Naive thymus-derived CD8-positive, alpha-beta T cell (primary cell): ENCODE measurements at regions of chr6 and their contacts with region 1.

Region 1: GRCh38 chr6:26103770-26104456 is 16.7 kb downstream of the HFE start:
- DNase-seq: peak; percentile 71 to 97 (median 94)
- ATAC-seq: peak; percentile 91 to 92
- H3K4me3 Mint-ChIP-seq: peak overlapping the region; percentile 87 to 93 (median 89)
- H3K27ac Mint-ChIP-seq: peak overlapping the region; percentile 96 to 100 (median 98)
- H3K4me1 Mint-ChIP-seq: peaks cover 10 to 20% (median 14%) of the 10 kb centered on the region in 4 donors
- H3K27me3 Mint-ChIP-seq: peaks cover 0 to 4% (median 0%) of the 10 kb centered on the region in 5 donors

Region 2: GRCh38 chr6:25136854-25137253 is 967.1 kb before region 1 on chr6:
- POLR2A ChIA-PET with region 1: no interaction called
- DNase-seq: no peak
- ATAC-seq: no peak
- H3K4me3 Mint-ChIP-seq: peak overlapping the region; percentile 84 to 95 (median 92)
- H3K27ac Mint-ChIP-seq: peak overlapping the region; percentile 90 to 98 (median 94)
- H3K4me1 Mint-ChIP-seq: peaks cover 24 to 50% (median 39%) of the 10 kb centered on the region in 4 donors
- H3K27me3 Mint-ChIP-seq: no peaks in the 10 kb centered on the region

Region 3: DNA sequence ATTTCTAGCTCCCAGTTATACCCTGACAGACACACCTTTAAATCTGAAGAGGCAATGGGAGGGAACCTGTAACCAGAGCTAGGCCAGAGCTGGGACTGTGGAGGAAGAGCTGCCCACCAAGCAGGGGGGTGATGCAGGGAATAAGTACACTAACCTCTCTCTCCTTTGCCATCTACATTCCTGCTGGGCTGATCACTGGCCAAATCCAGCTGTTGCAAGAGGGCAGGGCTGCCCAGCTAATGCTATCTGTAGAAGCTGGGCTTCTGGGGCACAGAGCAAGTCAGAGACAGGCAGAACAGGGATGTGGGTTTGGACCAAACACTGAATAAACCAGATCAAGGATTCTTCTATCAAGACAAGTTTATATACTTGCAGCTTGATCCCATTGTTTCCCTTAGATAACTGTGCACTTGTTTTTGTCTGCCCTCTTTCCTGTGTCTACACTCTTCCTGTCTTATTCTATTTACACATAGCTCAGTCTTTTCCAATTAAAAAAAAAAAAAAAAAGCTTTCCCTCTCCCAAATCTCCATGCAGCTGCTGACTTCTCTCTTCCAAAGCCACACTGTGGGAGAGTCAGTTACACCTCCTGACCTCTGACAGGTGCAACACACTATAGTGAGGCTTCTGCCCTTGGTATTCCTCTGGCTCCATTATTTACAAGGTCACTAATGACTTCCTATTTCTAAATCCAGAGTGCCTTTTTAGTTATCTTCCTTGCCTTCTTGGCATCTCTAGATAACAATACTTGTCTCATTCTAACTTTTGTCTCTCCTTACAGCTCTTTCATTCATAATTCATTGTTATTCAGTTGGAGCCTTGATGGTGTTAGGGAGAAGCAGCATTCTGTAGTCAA is 97.6 kb before region 1 on chr6:
- POLR2A ChIA-PET with region 1: no interaction called
- DNase-seq: no peak
- ATAC-seq: no peak
- H3K4me3 Mint-ChIP-seq: no peak overlapping the region
- H3K27ac Mint-ChIP-seq: peak overlapping the region in 1 of 10 donors; percentile 2
- H3K4me1 Mint-ChIP-seq: peaks cover 0 to 8% (median 2%) of the 10 kb centered on the region in 4 donors
- H3K27me3 Mint-ChIP-seq: no peaks in the 10 kb centered on the region

Region 4: DNA sequence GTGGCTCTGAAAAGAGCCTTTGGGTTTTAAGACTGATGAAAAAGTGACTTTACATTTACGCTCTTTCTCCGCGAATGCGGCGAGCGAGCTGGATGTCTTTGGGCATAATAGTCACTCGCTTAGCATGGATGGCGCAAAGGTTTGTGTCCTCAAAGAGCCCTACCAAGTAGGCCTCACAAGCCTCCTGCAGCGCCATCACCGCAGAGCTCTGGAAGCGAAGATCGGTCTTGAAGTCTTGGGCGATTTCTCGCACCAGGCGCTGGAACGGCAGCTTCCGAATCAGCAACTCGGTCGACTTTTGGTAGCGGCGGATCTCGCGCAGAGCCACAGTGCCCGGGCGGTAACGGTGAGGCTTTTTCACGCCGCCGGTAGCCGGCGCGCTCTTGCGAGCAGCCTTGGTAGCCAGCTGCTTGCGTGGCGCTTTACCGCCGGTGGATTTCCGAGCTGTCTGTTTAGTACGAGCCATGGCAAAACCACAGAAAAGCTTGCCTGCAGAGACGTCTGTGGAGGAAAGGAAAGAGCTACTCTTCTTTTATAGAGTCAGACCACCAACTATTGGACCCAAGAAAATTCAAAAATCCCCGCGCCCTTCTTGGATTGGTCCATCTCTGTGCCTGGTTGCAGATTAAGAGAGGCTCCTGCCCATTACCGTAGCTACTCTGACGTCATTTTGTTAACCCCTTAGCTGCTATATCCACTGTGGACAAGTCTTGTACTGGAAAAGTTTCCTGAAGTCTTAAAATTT is 72.1 kb before region 1 on chr6:
- POLR2A ChIA-PET with region 1: interaction called, 36 read pairs
- DNase-seq: peak; percentile 71 to 96 (median 91)
- ATAC-seq: peak; percentile 67 to 71
- H3K4me3 Mint-ChIP-seq: peak overlapping the region; percentile 94 to 97 (median 95)
- H3K27ac Mint-ChIP-seq: peak overlapping the region; percentile 93 to 99 (median 96)
- H3K4me1 Mint-ChIP-seq: peaks cover 11 to 52% (median 41%) of the 10 kb centered on the region in 4 donors
- H3K27me3 Mint-ChIP-seq: peaks cover 0 to 2% (median 0%) of the 10 kb centered on the region in 5 donors

Region 5: DNA sequence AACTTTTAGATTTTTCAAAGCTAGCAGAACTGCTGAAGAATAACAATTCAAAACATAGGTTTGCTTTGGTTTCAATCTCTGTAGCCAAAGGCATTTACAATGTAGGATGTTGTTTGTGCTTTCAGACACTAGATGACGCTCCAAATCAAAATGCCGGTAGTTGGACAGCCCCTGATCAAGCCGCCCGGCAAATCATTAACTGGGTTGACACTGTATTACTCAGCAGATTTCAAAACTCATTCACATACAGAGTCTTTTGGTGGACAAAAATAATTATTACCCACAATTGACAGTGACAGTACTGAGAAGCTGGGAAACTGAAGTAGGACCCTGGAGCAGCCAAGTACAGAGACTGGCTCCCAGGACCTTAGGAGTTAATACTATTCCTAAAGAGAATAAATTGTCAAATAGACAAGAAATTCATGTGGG is 37.9 kb before region 1 on chr6:
- POLR2A ChIA-PET with region 1: interaction called, 25 read pairs
- DNase-seq: peak in 8 of 10 donors; percentile 43 to 74 (median 66)
- ATAC-seq: peak; percentile 93 to 97
- H3K4me3 Mint-ChIP-seq: no peak overlapping the region
- H3K27ac Mint-ChIP-seq: no peak overlapping the region
- H3K4me1 Mint-ChIP-seq: peaks cover 2 to 10% (median 6%) of the 10 kb centered on the region in 4 donors
- H3K27me3 Mint-ChIP-seq: no peaks in the 10 kb centered on the region

Region 6: GRCh38 chr6:26175428-26176181 is 71.7 kb after region 1 on chr6:
- POLR2A ChIA-PET with region 1: interaction called, 16 read pairs
- DNase-seq: peak in 9 of 10 donors; percentile 21 to 76 (median 59)
- ATAC-seq: no peak
- H3K4me3 Mint-ChIP-seq: peak overlapping the region in 5 of 10 donors; percentile 33 to 62 (median 51)
- H3K27ac Mint-ChIP-seq: peak overlapping the region; percentile 11 to 82 (median 59)
- H3K4me1 Mint-ChIP-seq: peaks cover 15 to 43% (median 34%) of the 10 kb centered on the region in 4 donors
- H3K27me3 Mint-ChIP-seq: no peaks in the 10 kb centered on the region

Region 7: DNA sequence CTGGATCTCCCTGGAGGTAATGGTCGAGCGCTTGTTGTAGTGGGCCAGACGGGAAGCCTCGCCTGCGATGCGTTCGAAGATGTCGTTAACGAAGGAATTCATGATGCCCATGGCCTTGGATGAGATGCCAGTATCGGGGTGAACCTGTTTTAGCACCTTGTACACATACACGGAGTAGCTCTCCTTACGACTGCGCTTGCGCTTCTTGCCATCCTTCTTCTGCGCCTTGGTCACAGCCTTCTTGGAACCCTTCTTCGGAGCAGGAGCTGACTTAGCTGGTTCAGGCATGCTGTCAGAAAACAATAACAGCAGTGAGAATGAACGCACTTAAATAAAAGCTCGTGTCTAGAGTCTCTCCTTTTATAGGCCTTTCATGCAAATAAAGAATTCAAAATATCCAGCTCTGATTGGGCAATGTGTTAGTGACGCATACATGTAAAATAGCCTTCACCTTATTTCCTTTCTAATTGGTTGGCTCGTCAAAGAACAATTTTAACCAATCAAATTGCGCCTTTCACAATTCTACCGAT is 112.5 kb after region 1 on chr6:
- POLR2A ChIA-PET with region 1: interaction called, 18 read pairs
- DNase-seq: peak; percentile 34 to 95 (median 86)
- ATAC-seq: peak; percentile 81 to 84
- H3K4me3 Mint-ChIP-seq: no peak overlapping the region
- H3K27ac Mint-ChIP-seq: no peak overlapping the region
- H3K4me1 Mint-ChIP-seq: peaks cover 0 to 12% (median 7%) of the 10 kb centered on the region in 4 donors
- H3K27me3 Mint-ChIP-seq: no peaks in the 10 kb centered on the region